RWPE1 (cell line): ENCODE measurements at regions of chr4 and their contacts with region 1.

Region 1: GRCh38 chr4:122716825-122717448 is 15.6 kb upstream of the BBS12 start:
- DNase-seq: peak; percentile 84
- H3K27ac ChIP-seq: no peak overlapping the region
- CTCF ChIP-seq: peak; percentile 93

Region 2: DNA sequence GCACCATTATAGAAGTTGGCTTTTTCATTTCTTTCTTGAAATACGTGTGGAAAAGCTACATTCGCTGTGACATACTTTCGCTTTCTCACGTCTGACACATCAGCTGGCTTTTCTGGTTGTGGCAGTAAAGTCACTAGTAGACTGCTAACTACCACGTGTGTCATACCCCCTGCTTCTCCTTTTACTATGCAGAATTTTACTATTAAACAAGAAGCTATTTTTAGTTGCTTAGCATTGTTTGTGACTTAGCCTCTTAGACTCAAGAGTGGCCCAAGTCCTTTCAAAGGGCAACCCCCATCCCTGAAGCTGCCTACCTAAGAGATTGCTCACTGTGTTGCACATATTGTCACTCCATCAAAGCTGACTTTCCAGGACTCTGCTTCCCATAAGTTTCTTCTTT is 258.3 kb before region 1 on chr4:
- CTCF ChIA-PET with region 1: no interaction called
- POLR2A ChIA-PET with region 1: no interaction called
- DNase-seq: peak; percentile 9
- H3K27ac ChIP-seq: no peak overlapping the region
- CTCF ChIP-seq: no peak

Region 3: DNA sequence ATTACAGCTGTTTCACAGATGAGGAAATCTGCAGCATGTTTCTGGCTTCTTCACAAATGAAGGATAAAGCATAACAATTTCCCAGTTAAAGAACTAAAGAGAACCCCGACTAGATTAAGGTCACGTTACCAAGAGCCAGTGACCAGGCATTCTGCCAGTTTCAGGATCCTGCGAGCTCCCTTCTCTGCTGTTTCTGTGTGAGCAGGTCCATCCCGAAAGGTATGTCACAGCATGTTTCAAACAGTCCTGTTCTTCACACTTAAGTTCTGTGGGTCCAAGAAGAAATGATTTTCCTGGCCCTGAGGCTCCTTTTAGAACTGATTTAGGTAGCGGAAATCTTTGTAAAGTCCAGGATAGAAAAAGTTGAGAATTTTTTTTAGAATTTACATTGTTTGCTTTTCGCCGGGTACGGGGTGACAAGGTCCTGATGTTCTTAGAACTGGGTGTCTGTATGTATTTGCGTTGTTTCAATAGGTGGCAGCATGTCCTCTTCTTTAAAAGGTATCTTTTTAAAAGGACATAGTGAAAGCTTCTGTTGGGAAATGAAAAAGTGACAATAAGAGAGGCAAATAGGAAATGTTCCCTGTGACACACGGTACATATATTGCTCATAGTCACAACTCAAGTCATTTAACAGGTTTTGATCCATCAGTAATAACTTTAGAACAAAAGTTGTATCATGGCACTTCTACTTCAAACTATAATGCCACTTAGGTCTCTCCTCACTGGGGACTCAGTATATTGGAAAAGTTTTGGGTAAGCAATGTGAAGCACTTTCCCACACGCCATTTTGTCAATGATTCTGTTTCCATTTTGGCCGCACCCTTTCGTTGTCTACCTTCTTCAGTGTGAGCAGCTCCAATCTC is 114.4 kb before region 1 on chr4:
- CTCF ChIA-PET with region 1: interaction called, 27 read pairs
- POLR2A ChIA-PET with region 1: no interaction called
- DNase-seq: peak; percentile 45
- H3K27ac ChIP-seq: no peak overlapping the region
- CTCF ChIP-seq: peak; percentile 51